HEK293 (cell line): ENCODE measurements at regions of chr14 and their contacts with region 1.

Region 1: DNA sequence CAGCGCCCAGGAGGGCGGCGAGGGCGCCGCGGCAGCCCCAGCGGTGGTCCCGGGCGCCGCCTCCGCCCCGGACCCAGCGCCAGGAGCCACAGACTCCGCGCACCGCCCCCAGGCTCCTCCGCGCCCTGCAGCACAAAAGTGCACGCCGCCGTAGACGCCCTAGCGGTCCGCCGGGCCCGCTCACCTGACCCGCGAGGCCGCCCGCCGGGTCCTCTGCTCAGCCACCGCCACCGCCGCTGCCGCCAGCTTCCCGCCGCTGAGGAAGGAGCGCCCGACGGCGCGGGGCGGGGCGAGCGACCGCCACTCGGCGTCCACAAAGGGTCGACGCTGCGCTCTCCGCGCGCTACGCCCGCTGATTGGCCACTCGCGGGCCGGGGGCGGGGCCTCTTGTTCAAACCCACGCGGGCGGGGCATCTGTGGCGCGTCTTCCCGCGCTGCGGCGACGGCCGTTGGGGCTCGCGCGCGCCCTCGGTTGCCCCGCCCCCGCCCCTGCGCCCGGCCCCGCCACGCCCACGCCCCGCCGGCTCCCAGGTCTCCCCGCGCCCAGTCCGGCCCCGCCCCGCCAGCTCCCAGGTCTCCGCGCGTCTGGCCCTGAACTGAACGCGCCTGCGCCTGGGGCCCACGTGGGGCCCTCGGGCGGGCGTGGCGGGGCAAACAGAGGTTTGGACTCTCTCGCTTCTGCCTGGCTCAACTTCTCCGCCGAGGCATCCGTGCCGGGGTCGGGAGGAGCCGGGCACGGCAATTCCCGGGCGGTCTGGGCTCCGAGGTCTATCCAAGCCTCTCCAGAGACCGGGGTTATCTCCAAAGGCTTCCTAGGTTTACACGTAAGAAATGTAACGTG is at the start of gene CDCA4:
- H3K4me3 ChIP-seq: peak within 1 kb of the TSS; percentile 96
- H3K27ac ChIP-seq: peak within 1 kb of the TSS; percentile 99
- H3K4me1 ChIP-seq: peaks cover 11% of the 10 kb centered on the region
- CTCF ChIP-seq: no peak

Region 2: DNA sequence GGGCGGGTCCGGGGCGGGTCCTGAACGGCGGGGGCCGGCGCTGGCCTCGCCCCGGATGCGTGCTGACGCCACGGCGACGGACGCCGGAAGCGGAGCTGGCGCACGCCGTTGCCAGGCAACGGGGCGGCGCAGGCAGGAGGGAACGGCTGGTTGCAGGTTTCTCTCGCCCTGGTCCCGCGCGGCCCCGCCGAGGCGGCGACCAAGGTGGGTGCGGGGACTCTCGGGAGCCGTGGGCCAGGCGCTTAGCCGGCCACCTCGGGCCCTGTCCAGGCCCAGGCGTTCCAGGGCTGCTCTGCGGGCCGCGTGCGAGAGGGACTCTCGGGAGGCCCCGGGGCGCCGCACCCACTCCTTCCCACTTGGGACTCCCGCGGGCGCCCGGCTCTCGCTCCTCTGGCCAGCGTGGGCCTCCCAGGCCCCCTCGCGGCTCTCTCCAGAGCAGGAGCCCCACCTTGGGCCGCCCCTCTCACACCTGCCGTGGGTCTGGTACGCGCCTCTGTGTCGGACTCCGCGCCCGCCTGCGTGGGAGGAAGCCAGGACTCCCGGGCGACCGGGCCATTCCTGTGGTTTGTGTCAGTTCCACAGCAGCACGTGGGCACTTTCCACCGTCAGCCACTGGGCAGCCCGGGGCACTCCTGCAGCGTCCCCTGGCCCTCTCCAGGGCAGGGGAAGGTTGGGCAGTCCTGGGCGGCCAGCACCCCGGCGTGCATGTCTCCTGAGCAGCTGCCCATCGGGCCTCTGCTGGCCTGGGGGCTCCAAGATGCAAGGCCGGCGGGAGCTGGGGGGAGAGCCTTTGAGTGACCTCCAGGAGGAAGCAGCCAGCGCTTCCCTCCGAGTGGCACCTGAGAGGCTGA is 35.1 kb before region 1 on chr14 and contains the start of gene CLBA1:
- CTCF ChIA-PET with region 1: no interaction called
- POLR2A ChIA-PET with region 1: interaction called, 13 read pairs
- H3K4me3 ChIP-seq: peak within 1 kb of the TSS; percentile 76
- H3K27ac ChIP-seq: peak within 1 kb of the TSS; percentile 55; the same call in 1 of the 2 replicates
- H3K4me1 ChIP-seq: no peaks in the 10 kb centered on the region
- CTCF ChIP-seq: no peak

Region 3: GRCh38 chr14:105034314-105035039 is 13.4 kb after region 1 on chr14:
- CTCF ChIA-PET with region 1: interaction called, 9 read pairs
- POLR2A ChIA-PET with region 1: interaction called, 28 read pairs
- H3K4me3 ChIP-seq: peak overlapping the region; percentile 62
- H3K27ac ChIP-seq: no peak overlapping the region
- H3K4me1 ChIP-seq: peaks cover 2% of the 10 kb centered on the region; the same call in 1 of the 2 replicates
- CTCF ChIP-seq: no peak